Upper lobe of right lung (tissue), 1 donor: ENCODE measurements at regions of chr6 and their contacts with region 1.

Region 1: DNA sequence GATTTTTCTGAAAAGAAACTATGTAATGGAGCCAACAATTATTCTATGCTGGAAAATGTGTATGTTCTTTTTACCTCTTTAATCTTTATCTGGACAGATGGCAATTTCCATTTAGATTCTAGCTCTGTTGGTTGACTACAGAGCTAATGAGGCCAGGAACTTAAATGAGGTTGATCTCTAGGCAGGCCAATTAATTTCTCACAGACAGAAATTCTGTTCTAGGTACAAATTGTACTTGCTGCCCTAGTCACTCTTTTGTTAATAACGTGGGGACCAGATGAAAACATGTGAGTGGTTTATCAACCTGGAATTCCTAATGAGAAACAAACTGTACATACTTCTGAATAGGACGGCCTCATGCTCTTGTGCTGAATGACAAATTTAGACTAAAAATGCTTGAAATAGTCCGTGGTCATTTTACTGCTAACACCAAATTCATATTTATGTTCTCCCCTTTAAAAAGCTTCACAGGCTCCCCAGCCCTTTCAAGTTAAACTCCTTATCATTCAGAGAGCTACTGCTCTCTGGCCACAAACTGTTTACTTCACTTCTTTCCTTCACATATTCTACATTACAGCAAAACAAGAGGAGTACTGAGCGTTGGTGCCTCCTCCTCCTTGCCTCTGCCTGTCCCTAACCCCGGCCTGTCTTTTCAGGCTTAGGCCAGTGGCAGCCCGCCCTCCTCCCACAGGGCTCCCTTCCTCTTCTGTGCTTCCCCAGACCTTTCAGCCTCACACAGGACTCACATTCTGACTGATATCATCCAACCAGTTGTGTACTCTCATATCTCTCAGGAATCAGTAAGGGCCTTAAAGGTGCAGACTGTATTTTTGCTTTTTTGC is 41.4 kb downstream of the DTNBP1 start:
- DNase-seq: peak; percentile 81
- ATAC-seq: peak; percentile 99
- H3K4me3 ChIP-seq: no peak overlapping the region
- H3K27ac ChIP-seq: peak overlapping the region; percentile 64
- H3K4me1 ChIP-seq: peaks cover 37% of the 10 kb centered on the region
- H3K27me3 ChIP-seq: no peaks in the 10 kb centered on the region
- CTCF ChIP-seq: no peak

Region 2: GRCh38 chr6:15512126-15512525 is 109.3 kb before region 1 on chr6:
- intact Hi-C with region 1: loop called (anchors 10 kb)
- DNase-seq: no peak
- ATAC-seq: no peak
- H3K4me3 ChIP-seq: no peak overlapping the region
- H3K27ac ChIP-seq: no peak overlapping the region
- H3K4me1 ChIP-seq: no peaks in the 10 kb centered on the region
- H3K27me3 ChIP-seq: no peaks in the 10 kb centered on the region
- CTCF ChIP-seq: no peak